Activated CD4-positive, alpha-beta memory T cell treated with anti-CD3 and anti-CD28 coated beads, Interleukin-2, amount 10 ng/mL, durations not matched to agents 7 days and 5 days (primary cell): ENCODE measurements at regions of chr2 and their contacts with region 1.

Region 1: GRCh38 chr2:178112202-178113152 is at the start of gene RBM45:
- DNase-seq: peak; percentile 89
- H3K4me3 Mint-ChIP-seq: peak within 1 kb of the TSS; percentile 80
- H3K27ac Mint-ChIP-seq: peak within 1 kb of the TSS; percentile 89
- H3K4me1 Mint-ChIP-seq: peaks cover 26% of the 10 kb centered on the region
- H3K27me3 Mint-ChIP-seq: no peaks in the 10 kb centered on the region
- total RNA-seq, gene RBM45: 15.3 to 17.8 TPM

Region 2: DNA sequence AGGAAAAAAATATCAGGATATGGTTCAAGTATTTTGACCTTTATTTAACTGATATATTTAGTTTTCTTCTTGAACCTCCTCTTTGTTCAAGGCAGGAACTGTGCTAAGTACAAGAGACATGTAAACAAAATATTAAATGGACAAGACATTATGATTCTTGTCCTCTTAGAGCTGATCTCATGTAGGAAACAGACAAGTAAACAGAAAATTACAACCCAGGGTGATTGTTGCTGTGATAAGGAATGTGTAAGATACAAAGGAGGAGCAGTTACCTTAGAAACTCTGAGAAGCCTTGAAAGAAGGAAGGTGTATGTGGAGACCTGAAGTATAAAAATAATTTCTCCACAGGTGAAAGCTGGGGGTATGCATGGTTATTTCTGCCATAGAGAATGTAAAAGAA is 12.6 kb after region 1 on chr2:
- CTCF ChIA-PET with region 1: interaction called, 23 read pairs
- POLR2A ChIA-PET with region 1: interaction called, 9 read pairs
- DNase-seq: no peak
- H3K4me3 Mint-ChIP-seq: no peak overlapping the region
- H3K27ac Mint-ChIP-seq: no peak overlapping the region
- H3K4me1 Mint-ChIP-seq: no peaks in the 10 kb centered on the region
- H3K27me3 Mint-ChIP-seq: no peaks in the 10 kb centered on the region

Region 3: GRCh38 chr2:178284613-178285286 is 172.3 kb after region 1 on chr2:
- CTCF ChIA-PET with region 1: interaction called, 11 read pairs
- POLR2A ChIA-PET with region 1: no interaction called
- DNase-seq: no peak
- H3K4me3 Mint-ChIP-seq: no peak overlapping the region
- H3K27ac Mint-ChIP-seq: no peak overlapping the region
- H3K4me1 Mint-ChIP-seq: peaks cover 4% of the 10 kb centered on the region
- H3K27me3 Mint-ChIP-seq: peaks cover 12% of the 10 kb centered on the region

Region 4: DNA sequence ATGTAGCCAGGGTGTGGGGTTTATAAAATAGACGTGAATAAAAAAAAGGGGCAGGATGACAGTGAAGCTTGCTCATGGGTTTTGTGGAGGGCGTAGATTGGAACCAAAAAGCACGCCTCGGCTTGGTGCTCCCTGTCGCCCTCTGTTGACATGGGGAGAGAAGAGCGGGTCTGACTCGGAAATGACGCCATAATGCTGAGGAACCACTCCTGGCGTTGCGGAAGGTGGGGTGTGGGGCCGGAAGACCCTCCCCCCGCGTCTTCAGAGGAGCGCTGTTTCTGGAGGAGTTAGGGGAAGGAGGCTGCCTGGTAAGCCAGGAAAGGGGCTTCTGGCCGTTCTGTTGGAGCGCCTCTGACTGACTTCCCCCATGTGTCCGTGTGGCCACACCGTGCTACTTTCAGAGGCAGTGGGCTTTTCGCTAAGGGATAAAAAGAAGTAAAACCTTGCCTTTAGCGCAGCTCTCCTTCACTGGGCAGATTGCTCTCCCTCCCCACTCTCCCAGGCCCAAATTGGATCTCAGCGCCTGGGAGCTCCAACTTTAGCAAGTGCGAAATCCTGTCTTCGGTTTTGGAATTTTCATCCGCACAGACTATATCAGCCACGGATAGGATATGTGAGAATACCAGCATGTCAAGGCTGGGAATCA is 410.6 kb after region 1 on chr2:
- CTCF ChIA-PET with region 1: no interaction called
- POLR2A ChIA-PET with region 1: no interaction called
- DNase-seq: peak; percentile 88
- H3K4me3 Mint-ChIP-seq: peak overlapping the region; percentile 89
- H3K27ac Mint-ChIP-seq: peak overlapping the region; percentile 80
- H3K4me1 Mint-ChIP-seq: peaks cover 57% of the 10 kb centered on the region
- H3K27me3 Mint-ChIP-seq: no peaks in the 10 kb centered on the region